ENCODE measurements at regions of chr14 and their contacts with region 1.

Region 1: GRCh38 chr14:49867831-49868723 is 15.5 kb upstream of the NEMF start:
- DNase-seq: no peak
- H3K4me3 ChIP-seq: peak overlapping the region; percentile 71
- CTCF ChIP-seq: no peak

Region 2: DNA sequence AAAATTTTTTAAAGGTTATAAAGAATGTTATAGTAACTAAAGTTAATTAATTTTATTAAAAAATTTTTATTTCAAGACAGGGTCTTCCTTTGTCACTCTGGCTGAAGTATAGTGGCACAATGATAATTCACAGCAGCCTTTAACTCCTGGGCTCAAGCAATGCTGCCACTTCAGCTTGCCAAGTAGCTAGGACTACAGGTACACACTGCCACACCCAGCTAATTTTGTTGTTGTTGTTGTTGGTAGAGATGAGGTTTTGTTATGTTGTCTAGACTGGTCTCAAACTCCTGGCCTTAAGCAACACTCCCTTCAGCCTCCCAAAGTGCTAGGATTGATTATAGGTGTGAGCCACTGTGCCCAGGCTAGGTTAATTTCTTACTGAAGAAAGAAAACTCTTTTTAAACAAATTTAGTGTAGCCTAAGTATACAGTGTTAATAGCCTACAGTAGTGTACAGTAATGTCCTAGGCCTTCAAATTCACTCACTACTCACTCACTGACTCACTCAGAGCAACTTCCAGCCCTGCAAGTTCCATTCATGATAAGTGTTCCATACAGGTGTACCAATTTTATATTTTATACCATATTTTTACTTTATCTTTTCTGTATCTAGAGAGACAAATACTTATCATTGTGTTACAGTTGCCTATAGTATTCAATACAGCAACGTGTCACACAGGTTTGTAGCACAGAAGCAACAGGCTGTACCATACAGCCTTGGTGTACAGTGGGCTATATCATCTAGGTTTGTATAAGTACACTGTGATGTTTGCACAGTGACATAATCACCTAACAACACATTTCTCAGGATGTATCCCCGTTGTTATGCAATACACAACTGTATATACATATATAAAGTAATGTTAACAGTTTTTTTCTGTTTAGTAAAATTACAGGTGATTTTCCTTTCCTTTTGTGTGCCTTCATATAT is 208.3 kb before region 1 on chr14:
- CTCF ChIA-PET with region 1: no interaction called
- POLR2A ChIA-PET with region 1: no interaction called
- DNase-seq: no peak
- H3K4me3 ChIP-seq: no peak overlapping the region
- CTCF ChIP-seq: no peak

Region 3: GRCh38 chr14:49852301-49853157 is 15.5 kb before region 1 on chr14 and contains the start of gene NEMF:
- CTCF ChIA-PET with region 1: interaction called, 174 read pairs
- POLR2A ChIA-PET with region 1: interaction called, 17 read pairs
- DNase-seq: no peak
- H3K4me3 ChIP-seq: peak within 1 kb of the TSS; percentile 96
- CTCF ChIP-seq: peak; percentile 72

Region 4: DNA sequence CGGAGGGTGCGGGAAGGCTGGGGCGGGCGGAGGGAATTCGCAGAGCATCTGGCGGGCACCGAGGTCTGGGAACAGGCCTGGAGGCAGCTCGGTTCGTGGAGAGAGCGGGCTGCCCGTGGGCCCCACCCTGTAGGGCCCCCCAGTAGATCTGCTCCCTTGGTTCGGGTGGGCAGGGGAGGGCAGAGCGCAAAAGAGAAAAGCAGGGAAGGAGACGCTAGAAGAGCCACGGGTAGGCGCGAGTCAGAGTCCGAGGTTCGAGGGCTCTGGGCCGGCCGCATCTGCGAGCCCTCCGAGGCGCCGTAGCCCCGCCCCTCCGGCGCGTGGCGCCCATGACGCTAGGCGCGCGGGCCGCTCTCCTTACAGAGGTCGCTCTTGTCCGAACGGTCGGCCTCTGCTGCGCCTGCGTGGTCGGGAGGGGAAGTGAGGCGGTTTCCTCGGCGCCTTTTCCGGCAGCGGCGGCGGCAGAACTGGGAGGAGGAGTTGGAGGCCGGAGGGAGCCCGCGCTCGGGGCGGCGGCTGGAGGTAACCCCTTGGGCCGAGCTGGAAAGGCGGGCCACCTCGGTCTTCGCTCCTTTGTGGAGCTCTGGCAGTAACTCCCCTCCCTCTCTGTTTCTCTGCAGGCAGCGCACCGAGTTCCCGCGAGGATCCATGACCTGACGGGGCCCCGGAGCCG is 24.7 kb after region 1 on chr14 and contains the start of gene ARF6:
- CTCF ChIA-PET with region 1: interaction called, 21 read pairs
- POLR2A ChIA-PET with region 1: interaction called, 17 read pairs
- DNase-seq: peak; percentile 77
- H3K4me3 ChIP-seq: peak within 1 kb of the TSS; percentile 80
- CTCF ChIP-seq: peak; percentile 15

Region 5: DNA sequence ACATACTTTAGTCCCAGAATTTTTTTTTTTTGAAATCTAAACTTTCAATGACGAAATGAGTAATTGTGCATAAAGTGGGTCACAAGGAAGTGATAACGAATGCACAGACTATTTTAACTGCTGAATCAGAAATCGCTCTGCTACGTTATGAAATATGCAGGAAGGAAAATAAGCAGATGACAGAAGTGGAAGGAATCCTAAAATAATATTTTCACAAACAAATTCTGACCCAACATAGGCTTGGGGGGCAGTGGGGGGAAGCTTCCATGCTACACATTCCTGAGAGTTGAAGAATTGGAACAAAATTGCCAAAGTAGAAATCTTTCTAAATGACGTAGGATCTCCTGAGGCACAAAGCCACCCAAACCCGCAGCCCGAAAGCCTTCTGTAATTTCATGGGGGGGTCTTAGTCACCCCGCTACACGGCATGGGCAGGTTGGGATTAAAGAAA is 114.4 kb after region 1 on chr14:
- CTCF ChIA-PET with region 1: interaction called, 16 read pairs
- POLR2A ChIA-PET with region 1: interaction called, 4 read pairs
- DNase-seq: peak; percentile 93
- H3K4me3 ChIP-seq: 0 out of 2 replicates have a peak overlapping the region, but pooled peaks have one; percentile 16
- CTCF ChIP-seq: no peak

Region 6: GRCh38 chr14:50038398-50039119 is 170.5 kb after region 1 on chr14:
- CTCF ChIA-PET with region 1: interaction called, 11 read pairs
- POLR2A ChIA-PET with region 1: interaction called, 25 read pairs
- DNase-seq: peak; percentile 95
- H3K4me3 ChIP-seq: no peak overlapping the region
- CTCF ChIP-seq: no peak

Region 7: DNA sequence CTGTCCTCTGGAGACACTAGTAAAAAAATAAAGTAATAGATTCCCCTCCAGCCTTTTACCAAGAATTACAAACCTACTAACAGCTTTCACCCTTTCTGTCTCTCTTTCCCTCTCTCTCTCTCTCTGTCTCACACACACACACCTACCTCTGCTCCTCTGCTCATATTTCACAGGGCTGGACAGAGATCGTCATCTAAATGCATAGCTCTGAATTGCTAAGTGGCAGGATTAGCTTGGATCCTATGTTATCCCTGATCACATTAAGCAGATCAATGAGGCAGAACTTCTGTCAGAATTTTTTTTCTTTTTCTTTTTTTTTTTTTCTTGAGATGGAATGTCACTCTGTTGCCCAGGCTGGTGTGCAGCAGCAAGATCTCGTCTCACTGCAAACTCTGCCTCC is 225.4 kb after region 1 on chr14:
- CTCF ChIA-PET with region 1: interaction called, 368 read pairs
- POLR2A ChIA-PET with region 1: no interaction called
- DNase-seq: no peak
- H3K4me3 ChIP-seq: no peak overlapping the region
- CTCF ChIP-seq: no peak